Adrenal gland (tissue), 19 donors: ENCODE measurements at regions of chr4 and their contacts with region 1.

Region 1: GRCh38 chr4:15457406-15458201 is 12.1 kb upstream of the CC2D2A start:
- DNase-seq: no peak
- H3K4me3 ChIP-seq: no peak overlapping the region
- H3K27ac ChIP-seq: peak overlapping the region in 2 of 5 donors; percentile 30 to 42
- H3K4me1 ChIP-seq: peaks cover 3 to 8% of the 10 kb centered on the region in 2 donors
- H3K27me3 ChIP-seq: no peaks in the 10 kb centered on the region
- CTCF ChIP-seq: peak; percentile 76 to 81 (median 78)
- POLR2A ChIP-seq: no peak

Region 2: GRCh38 chr4:15396157-15396800 is 61.3 kb before region 1 on chr4:
- intact Hi-C with region 1: loop called in 1 of 2 experiments (anchors 10 kb)
- DNase-seq: peak in 6 of 7 donors; percentile 40 to 75 (median 49)
- H3K4me3 ChIP-seq: no peak overlapping the region
- H3K27ac ChIP-seq: no peak overlapping the region
- H3K4me1 ChIP-seq: peaks cover 4 to 15% of the 10 kb centered on the region in 2 donors
- H3K27me3 ChIP-seq: no peaks in the 10 kb centered on the region
- CTCF ChIP-seq: peak; percentile 48 to 68 (median 60)
- POLR2A ChIP-seq: no peak